Activated CD4-positive, alpha-beta T cell treated with anti-CD3 and anti-CD28 coated beads, Interleukin-2, amount 10 ng/mL, durations not matched to agents 24 days and 14 days (primary cell): ENCODE measurements at regions of chr1 and their contacts with region 1.

Region 1: GRCh38 chr1:160098852-160099561 is 588 bp upstream of the IGSF8 start:
- DNase-seq: peak; percentile 99
- H3K4me3 Mint-ChIP-seq: peak overlapping the region; percentile 83
- H3K27ac Mint-ChIP-seq: peak overlapping the region; percentile 74
- H3K4me1 Mint-ChIP-seq: peaks cover 35% of the 10 kb centered on the region
- H3K27me3 Mint-ChIP-seq: no peaks in the 10 kb centered on the region

Region 2: DNA sequence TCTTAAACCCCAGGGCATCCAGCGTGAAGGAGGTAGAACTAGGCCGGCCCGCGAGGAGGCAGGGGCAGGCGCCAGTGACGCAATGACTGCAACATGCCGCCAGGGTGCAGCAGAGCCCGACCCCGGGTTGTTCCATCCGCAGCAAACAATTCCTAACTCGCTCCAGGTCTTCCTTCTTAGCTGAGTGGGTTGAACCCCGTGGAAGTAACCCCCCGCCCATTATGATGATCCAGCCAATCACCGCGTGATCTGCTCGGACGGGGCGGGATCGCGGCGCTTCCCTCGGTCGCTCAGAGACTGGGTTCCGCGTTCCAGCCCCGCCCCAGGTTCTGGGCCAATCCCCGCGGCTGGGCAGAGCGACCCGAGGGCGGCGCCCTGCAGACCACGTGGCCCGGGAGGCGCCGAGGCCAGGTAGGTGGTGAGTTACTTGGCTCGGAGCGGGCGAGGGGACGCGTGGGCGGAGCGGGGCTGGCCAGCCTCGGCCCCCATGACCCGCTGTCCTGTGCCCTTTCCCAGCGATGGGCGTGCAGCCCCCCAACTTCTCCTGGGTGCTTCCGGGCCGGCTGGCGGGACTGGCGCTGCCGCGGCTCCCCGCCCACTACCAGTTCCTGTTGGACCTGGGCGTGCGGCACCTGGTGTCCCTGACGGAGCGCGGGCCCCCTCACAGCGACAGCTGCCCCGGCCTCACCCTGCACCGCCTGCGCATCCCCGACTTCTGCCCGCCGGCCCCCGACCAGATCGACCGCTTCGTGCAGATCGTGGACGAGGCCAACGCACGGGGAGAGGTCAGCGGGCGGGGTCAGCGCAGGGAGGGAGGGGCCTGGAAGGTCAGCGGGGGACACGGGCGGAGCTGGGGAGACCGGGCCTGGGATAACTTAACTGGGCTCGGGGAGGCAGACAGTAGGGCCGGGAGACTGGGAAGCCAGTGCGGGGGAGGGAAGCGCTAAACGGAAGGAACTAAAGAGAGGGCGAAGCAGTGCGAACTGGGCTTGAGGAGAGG is 318.1 kb before region 1 on chr1 and contains the start of gene DUSP23:
- intact Hi-C with region 1: loop called (anchors 5 kb)
- DNase-seq: peak; percentile 99
- H3K4me3 Mint-ChIP-seq: peak within 1 kb of the TSS; percentile 80
- H3K27ac Mint-ChIP-seq: peak within 1 kb of the TSS; percentile 30
- H3K4me1 Mint-ChIP-seq: peaks cover 7% of the 10 kb centered on the region
- H3K27me3 Mint-ChIP-seq: peaks cover 19% of the 10 kb centered on the region
- total RNA-seq, gene DUSP23: 30.9 and 33.0 TPM in 2 replicates

Region 3: DNA sequence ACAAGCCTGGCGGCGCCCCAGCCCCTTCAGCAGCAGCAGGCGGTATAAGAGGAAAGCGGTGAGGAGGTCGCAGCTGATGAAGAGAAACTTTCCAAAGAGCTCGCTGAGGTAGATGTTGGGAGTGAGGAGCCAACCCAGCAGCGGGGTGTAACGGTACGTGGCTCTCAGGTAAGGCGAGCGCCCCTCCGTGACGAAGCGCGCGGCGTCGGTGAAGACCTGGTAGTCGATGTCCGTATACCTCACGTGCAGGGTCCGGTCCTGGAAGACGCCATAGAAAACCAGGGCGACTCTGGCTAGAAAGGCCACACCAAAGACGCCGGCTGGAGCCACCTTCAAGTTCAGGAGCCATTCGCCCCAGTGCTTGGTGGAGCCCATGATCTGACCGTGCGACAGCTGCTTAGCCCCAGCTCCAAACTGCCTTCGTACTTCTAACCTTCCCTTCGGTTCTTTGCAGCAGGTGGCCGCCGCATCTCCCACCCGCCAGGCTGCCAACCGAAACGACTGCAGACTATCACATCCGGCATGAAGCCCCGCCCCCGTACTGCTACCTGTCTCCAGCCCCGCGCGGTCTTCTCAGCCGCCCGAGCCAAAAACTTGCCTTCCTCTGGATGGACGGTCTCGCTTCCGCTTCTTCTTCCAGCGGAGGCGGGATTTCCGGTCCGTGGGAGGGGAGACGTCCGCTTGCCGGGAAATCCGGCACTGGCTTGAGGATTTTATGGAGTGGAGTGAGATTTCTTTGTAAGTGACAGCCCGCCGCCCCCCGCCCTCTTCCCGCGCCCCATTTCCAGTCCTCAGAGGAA is 67.4 kb before region 1 on chr1 and contains the start of gene PIGM:
- intact Hi-C with region 1: loop called (anchors 1 kb)
- DNase-seq: peak; percentile 98
- H3K4me3 Mint-ChIP-seq: peak within 1 kb of the TSS; percentile 92
- H3K27ac Mint-ChIP-seq: peak within 1 kb of the TSS; percentile 85
- H3K4me1 Mint-ChIP-seq: peaks cover 32% of the 10 kb centered on the region
- H3K27me3 Mint-ChIP-seq: peaks cover 15% of the 10 kb centered on the region
- total RNA-seq, gene PIGM: 5.5 and 5.8 TPM in 2 replicates

Region 4: GRCh38 chr1:160251687-160252526 is 152.9 kb after region 1 on chr1:
- intact Hi-C with region 1: loop called (anchors 2 kb)
- DNase-seq: peak; percentile 87
- H3K4me3 Mint-ChIP-seq: no peak overlapping the region
- H3K27ac Mint-ChIP-seq: no peak overlapping the region
- H3K4me1 Mint-ChIP-seq: peaks cover 9% of the 10 kb centered on the region
- H3K27me3 Mint-ChIP-seq: no peaks in the 10 kb centered on the region

Region 5: DNA sequence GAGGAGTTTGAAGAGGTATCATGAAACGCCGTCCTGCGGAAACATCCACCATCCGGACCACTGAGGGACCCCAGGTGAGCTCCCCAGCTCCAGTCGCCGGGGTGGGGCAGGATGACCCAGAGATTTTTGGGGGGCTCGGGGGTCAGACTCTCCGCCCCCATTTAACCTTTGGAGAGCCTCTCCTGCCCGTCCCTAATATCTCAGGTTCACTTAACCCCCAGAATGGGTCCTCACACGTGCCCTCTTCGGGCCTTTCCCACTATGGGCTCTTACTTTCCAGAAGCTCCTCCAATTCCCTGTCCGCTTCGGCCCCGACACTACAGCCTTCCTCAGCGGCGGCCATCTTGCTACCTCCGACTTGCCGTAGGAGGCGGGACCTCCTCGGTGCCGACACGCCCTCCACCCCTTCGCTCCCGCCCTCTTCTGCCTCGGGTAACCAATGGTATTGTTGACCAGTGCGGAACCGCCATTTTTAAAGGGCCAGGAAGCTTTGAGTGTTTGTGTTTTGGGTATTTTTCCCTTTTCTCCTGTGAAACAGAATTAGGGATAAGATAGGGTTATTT is 185.9 kb after region 1 on chr1 and contains the start of gene PEX19:
- intact Hi-C with region 1: loop called (anchors 2 kb)
- DNase-seq: peak; percentile 99
- H3K4me3 Mint-ChIP-seq: peak within 1 kb of the TSS; percentile 100
- H3K27ac Mint-ChIP-seq: peak within 1 kb of the TSS; percentile 90
- H3K4me1 Mint-ChIP-seq: peaks cover 21% of the 10 kb centered on the region
- H3K27me3 Mint-ChIP-seq: no peaks in the 10 kb centered on the region
- total RNA-seq, gene PEX19: 51.8 and 60.2 TPM in 2 replicates

Region 6: GRCh38 chr1:160376525-160377131 is 277.6 kb after region 1 on chr1:
- intact Hi-C with region 1: loop called (anchors 2 kb)
- DNase-seq: peak; percentile 80
- H3K4me3 Mint-ChIP-seq: no peak overlapping the region
- H3K27ac Mint-ChIP-seq: no peak overlapping the region
- H3K4me1 Mint-ChIP-seq: peaks cover 13% of the 10 kb centered on the region
- H3K27me3 Mint-ChIP-seq: peaks cover 13% of the 10 kb centered on the region